ENCODE measurements at regions of chr22 and their contacts with region 1.

Region 1: GRCh38 chr22:16917144-16918003 is 90.6 kb downstream of the GAB4 start:
- DNase-seq: peak; percentile 57 to 71
- ATAC-seq: peak; percentile 53 to 82 (median 69)
- H3K4me3 ChIP-seq: no peak overlapping the region
- H3K27ac ChIP-seq: no peak overlapping the region
- H3K4me1 ChIP-seq: no peaks in the 10 kb centered on the region
- H3K27me3 ChIP-seq: peaks cover 0 to 2% (median 0%) of the 10 kb centered on the region in 3 donors
- CTCF ChIP-seq: peak; percentile 61

Region 2: DNA sequence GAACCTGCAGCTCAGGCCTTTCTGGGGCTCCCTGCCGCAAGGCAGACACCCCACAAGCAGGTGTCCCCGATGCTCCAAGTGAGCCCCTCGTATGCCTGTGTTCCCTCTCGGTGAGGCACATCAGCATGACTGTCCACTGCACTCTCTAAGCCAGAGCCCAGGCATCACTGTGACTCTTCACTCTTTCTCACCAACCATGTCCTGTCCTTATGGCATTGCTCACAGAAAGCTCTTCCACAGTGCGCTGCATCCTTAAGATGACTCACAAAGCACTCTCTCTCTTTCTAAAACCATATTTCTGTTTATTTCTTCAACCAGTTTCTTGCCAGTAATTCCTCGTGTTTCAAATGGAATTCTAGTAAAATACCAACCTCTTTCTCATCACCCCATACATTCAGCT is 72.5 kb after region 1 on chr22:
- intact Hi-C with region 1: loop called in 1 of 2 experiments (anchors 10 kb)
- DNase-seq: no peak
- ATAC-seq: no peak
- H3K4me3 ChIP-seq: no peak overlapping the region
- H3K27ac ChIP-seq: no peak overlapping the region
- H3K4me1 ChIP-seq: no peaks in the 10 kb centered on the region
- H3K27me3 ChIP-seq: peaks cover 0 to 3% (median 3%) of the 10 kb centered on the region in 3 donors
- CTCF ChIP-seq: no peak

Region 3: GRCh38 chr22:17057959-17058814 is 140.8 kb after region 1 on chr22:
- intact Hi-C with region 1: loop called (anchors 2 kb)
- DNase-seq: peak; percentile 40 to 66
- ATAC-seq: peak; percentile 82 to 93 (median 88)
- H3K4me3 ChIP-seq: no peak overlapping the region
- H3K27ac ChIP-seq: no peak overlapping the region
- H3K4me1 ChIP-seq: no peaks in the 10 kb centered on the region
- H3K27me3 ChIP-seq: no peaks in the 10 kb centered on the region
- CTCF ChIP-seq: peak; percentile 88

Measured in psoas muscle (tissue), 8 donors.